Mucosa of descending colon (tissue), 3 donors: ENCODE measurements at regions of chr9 and their contacts with region 1.

Region 1: DNA sequence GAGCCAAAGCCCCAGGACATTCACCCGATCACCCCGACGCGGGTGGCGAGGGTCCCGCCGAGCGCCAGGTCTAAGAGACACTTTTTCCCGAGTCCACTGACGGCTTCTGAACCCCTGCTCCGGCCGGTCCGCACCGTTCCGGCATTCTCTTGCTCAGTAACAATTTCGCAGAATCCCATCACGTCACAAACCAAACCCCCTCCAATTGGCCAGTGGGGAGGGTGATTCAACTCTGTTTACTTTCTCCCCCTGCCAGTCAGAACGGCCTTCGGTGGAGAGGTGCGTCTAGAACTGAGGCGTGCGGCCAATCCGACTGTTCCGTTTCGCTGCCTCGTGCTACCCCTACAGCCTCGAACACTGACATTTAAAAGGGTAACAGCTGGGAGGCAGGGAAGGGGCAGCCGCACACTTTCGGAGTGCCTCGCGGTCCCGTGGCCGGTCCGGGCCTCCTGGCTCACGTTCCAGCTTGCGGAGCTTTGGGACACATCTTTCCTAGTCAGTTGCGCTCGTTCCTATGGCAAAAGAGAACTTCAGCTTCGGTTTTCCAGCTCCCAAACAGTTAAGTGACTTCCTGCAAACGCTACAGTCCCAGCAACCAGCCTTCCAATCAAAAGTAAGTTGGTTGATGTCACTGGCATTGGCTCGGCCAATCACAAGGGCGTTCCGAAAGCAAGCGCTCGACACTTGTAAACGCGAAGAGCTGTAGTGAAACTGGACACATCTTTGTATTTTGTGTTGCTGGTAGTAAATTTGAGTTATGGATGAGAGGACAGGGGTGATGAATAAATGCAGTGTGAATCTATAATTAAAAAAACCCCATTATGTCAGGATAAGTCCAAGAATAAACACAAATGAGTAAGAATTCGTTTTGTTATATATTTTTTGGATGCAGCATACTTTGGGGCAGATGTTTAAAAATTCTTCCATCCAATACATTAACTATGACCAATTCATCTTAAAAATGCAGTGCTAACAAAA is at the start of gene KLF9:
- DNase-seq: peak; percentile 90 to 96 (median 92)
- ATAC-seq: peak; percentile 69
- H3K4me3 ChIP-seq: peak within 1 kb of the TSS; percentile 92
- H3K4me1 ChIP-seq: peaks cover 34% of the 10 kb centered on the region
- CTCF ChIP-seq: no peak
- total RNA-seq, gene KLF9: 29.5 to 104 (median 45.4) TPM

Region 2: GRCh38 chr9:70589571-70590314 is 175.7 kb after region 1 on chr9:
- intact Hi-C with region 1: loop called in 1 of 2 experiments (anchors 10 kb)
- DNase-seq: no peak
- ATAC-seq: peak; percentile 13
- H3K4me3 ChIP-seq: no peak overlapping the region
- H3K4me1 ChIP-seq: no peaks in the 10 kb centered on the region
- CTCF ChIP-seq: no peak